Right ventricle myocardium superior (tissue), 1 donor: ENCODE measurements at regions of chr5 and their contacts with region 1.

Region 1: GRCh38 chr5:173887610-173888472 is at the start of gene CPEB4:
- DNase-seq: peak; percentile 99
- ATAC-seq: peak; percentile 94
- total RNA-seq, gene CPEB4: 118 TPM

Region 2: DNA sequence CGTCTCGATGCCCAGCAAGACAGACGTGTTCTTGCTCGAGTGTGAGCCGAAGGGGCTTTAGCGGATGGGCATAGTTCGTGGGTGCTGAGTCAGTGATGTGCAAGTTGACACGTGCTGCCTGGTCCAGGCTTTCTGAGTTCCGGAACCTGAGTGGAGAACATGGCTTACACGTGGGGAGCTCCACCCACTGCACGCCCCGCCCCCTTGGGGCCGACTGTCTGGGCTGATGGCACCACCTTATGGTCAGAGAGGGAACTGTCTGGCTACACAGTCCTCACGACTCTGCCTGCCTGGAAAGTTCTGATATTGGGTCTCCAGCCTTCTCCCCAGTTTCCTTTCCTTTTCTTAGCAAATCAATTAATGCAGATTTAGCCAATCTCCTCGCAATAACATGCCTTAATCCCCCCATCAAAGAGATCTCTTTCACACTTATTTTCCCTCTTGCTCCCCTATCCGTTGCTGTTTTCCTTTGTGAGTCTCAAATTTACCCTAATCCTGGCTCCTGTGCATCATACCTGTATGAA is 555.8 kb before region 1 on chr5:
- intact Hi-C with region 1: no loop called
- DNase-seq: peak; percentile 92
- ATAC-seq: peak; percentile 66

Region 3: GRCh38 chr5:173615884-173616576 is 271.8 kb before region 1 on chr5:
- intact Hi-C with region 1: loop called (anchors 5 kb)
- DNase-seq: peak; percentile 64
- ATAC-seq: peak; percentile 74

Region 4: GRCh38 chr5:173781814-173782670 is 105.8 kb before region 1 on chr5:
- intact Hi-C with region 1: no loop called
- DNase-seq: peak; percentile 82
- ATAC-seq: peak; percentile 85